Activated B cell treated with CpG ODN at 0.5 μM for 24 hours (primary cell): ENCODE measurements at regions of chr1 and their contacts with region 1.

Region 1: DNA sequence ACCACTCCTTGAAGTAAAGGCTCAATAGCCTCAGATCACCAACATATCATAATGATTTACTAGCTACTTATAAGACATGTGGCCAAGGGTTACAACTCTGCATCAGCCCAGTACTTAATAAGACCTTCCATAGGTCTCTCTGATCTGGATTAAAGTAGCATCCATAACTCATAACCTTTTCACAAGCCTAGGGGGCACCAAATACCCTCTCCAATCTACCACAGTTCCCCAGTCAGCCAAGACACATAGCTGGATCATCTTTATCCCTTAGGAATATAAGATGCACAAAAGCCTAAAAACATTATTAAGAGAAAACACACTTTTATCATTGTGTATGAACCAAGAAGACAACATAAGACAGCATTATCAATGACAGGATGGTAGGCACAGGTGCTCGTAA is 22.1 kb downstream of the SSX2IP start:
- DNase-seq: no peak
- ATAC-seq: no peak
- H3K4me3 Mint-ChIP-seq: no peak overlapping the region
- H3K27ac Mint-ChIP-seq: no peak overlapping the region
- H3K4me1 Mint-ChIP-seq: no peaks in the 10 kb centered on the region
- H3K27me3 Mint-ChIP-seq: no peaks in the 10 kb centered on the region
- CTCF ChIP-seq: no peak

Region 2: DNA sequence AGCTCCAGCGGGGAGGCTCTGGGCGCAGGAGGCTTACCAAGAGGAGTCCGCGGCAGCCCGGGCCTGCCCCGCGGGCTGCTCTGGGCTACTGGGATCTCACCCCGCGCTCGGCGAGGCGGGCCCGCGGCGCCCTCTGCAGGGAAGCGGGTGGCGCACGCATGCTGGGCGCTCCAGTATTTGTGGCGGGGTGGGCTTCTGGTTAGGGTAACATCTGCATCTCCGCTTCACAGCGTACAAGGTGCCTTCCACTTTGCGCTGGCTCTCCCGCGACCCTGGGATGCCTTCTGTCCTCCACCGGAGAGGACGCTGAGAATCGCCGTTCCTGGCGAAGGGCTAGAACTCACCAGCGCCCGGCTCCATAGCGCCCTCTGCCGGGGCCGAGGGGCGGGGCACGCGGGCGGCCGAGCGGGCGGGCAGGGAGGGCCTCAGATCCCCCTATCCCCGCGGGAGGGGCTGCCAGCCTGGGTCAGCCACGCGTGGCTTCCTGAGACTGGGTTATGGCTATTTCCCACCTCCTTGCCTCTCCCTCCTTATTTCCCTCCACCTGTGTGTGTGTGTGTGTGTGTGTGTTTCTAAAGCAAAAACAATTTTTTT is 47.4 kb before region 1 on chr1:
- CTCF ChIA-PET with region 1: no interaction called
- POLR2A ChIA-PET with region 1: no interaction called
- intact Hi-C with region 1: no loop called
- DNase-seq: peak; percentile 91
- ATAC-seq: peak; percentile 93
- H3K4me3 Mint-ChIP-seq: peak overlapping the region; percentile 95
- H3K27ac Mint-ChIP-seq: peak overlapping the region; percentile 82
- H3K4me1 Mint-ChIP-seq: peaks cover 2% of the 10 kb centered on the region
- H3K27me3 Mint-ChIP-seq: peaks cover 8% of the 10 kb centered on the region
- CTCF ChIP-seq: peak; percentile 99

Region 3: GRCh38 chr1:84724128-84724860 is 56.1 kb after region 1 on chr1:
- CTCF ChIA-PET with region 1: interaction called, 16 read pairs
- POLR2A ChIA-PET with region 1: no interaction called
- intact Hi-C with region 1: loop called (anchors 2 kb)
- DNase-seq: peak; percentile 23
- ATAC-seq: peak; percentile 56
- H3K4me3 Mint-ChIP-seq: no peak overlapping the region
- H3K27ac Mint-ChIP-seq: no peak overlapping the region
- H3K4me1 Mint-ChIP-seq: no peaks in the 10 kb centered on the region
- H3K27me3 Mint-ChIP-seq: peaks cover 5% of the 10 kb centered on the region
- CTCF ChIP-seq: no peak

Region 4: DNA sequence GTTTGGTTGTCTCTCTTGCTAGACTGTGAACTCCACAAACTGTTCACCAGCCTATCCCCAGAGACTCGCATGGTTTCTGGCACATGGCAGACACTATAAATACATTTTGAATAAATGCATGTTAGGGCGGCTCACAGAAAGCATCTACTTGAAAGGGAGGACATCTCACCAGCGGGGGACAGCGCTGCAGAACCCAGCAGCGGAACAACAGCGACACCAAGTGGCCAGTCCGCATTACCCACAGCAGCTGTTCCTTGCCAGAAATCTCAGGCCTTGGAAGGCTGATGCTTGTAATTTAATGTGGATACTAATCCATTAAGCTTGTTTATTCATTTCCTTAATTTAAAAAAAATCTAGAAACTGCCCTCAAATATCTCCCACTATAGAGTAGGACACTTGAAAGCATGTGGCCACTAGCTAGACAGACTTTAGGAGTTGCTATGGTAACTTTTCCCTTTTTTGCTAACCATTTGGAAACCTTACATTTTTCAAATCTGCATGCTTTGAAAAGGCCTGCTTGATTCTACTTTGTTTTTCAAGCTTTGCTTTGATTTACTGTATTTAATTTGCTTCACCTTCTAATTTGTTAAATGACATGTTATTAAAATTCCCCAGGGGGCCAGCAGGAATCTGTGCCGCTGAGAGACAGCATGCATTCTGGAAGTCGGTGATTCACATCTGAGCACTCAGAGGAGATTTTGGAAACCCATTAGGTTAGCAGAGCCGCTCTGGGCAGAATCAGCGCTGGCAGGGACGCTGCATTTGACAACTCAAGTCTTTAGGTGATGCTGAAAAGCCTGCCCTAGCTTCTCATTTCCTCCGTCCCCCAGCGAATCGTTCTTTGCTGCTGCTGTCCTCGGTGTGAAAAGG is 85.6 kb after region 1 on chr1:
- CTCF ChIA-PET with region 1: interaction called, 8 read pairs
- POLR2A ChIA-PET with region 1: no interaction called
- intact Hi-C with region 1: loop called (anchors 1 kb)
- DNase-seq: peak; percentile 34
- ATAC-seq: peak; percentile 81
- H3K4me3 Mint-ChIP-seq: no peak overlapping the region
- H3K27ac Mint-ChIP-seq: no peak overlapping the region
- H3K4me1 Mint-ChIP-seq: peaks cover 4% of the 10 kb centered on the region
- H3K27me3 Mint-ChIP-seq: peaks cover 22% of the 10 kb centered on the region
- CTCF ChIP-seq: peak; percentile 51

Region 5: GRCh38 chr1:84772428-84772943 is 104.3 kb after region 1 on chr1:
- CTCF ChIA-PET with region 1: no interaction called
- POLR2A ChIA-PET with region 1: no interaction called
- intact Hi-C with region 1: loop called (anchors 1 kb)
- DNase-seq: peak; percentile 58
- ATAC-seq: peak; percentile 71
- H3K4me3 Mint-ChIP-seq: no peak overlapping the region
- H3K27ac Mint-ChIP-seq: no peak overlapping the region
- H3K4me1 Mint-ChIP-seq: no peaks in the 10 kb centered on the region
- H3K27me3 Mint-ChIP-seq: peaks cover 5% of the 10 kb centered on the region
- CTCF ChIP-seq: peak; percentile 43

Region 6: GRCh38 chr1:85058311-85058710 is 390.1 kb after region 1 on chr1:
- CTCF ChIA-PET with region 1: no interaction called
- POLR2A ChIA-PET with region 1: no interaction called
- intact Hi-C with region 1: no loop called
- DNase-seq: no peak
- ATAC-seq: no peak
- H3K4me3 Mint-ChIP-seq: no peak overlapping the region
- H3K27ac Mint-ChIP-seq: no peak overlapping the region
- H3K4me1 Mint-ChIP-seq: peaks cover 27% of the 10 kb centered on the region
- H3K27me3 Mint-ChIP-seq: peaks cover 12% of the 10 kb centered on the region
- CTCF ChIP-seq: no peak